Dendritic cell treated with granulocyte-macrophage colony-stimulating factor and Interleukin-4, amounts not matched to agents 40 ng/mL and 50 ng/mL, for 4 days (primary cell): ENCODE measurements at regions of chr1 and their contacts with region 1.

Region 1: DNA sequence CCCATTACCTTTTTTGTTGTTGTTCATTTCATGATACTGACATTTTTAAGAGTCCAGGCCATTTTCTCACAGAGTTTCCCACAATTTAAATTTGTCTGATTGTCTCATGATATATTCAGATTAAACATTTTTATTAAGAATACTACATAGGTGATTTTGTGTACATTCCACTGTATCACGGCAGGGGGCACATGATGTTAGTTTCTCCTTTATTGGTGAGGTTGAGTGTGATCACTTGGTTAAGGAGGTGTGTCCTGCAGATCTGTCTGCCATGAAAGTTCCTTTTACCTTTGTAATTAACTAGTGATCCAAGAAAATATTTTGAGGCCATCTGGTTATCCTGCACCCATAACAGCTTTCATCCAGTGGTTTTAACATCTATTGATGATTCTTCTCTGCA is 11.8 kb downstream of the RTCA start:
- H3K4me3 Mint-ChIP-seq: no peak overlapping the region
- H3K27ac Mint-ChIP-seq: no peak overlapping the region
- H3K4me1 Mint-ChIP-seq: no peaks in the 10 kb centered on the region
- H3K27me3 Mint-ChIP-seq: no peaks in the 10 kb centered on the region

Region 2: DNA sequence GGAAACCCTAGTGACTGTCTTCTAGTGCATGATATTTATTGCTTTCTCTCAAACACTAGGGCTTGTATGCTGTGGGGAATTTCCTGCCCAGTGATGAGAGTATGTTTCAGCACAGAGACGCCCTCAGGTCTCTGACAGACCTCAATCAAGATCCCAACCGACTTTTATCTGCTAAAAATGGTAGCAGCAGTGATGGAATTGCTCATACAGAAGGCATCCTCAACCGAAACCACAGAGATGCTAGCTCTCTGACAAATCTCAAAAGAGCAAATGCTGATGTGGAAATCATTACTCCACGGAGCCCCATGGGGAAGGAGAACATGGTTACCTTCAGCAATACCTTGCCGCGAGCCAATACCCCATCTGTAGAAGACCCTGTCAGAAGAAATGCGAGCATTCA is 972.2 kb before region 1 on chr1:
- intact Hi-C with region 1: no loop called
- H3K4me3 Mint-ChIP-seq: no peak overlapping the region
- H3K27ac Mint-ChIP-seq: no peak overlapping the region
- H3K4me1 Mint-ChIP-seq: no peaks in the 10 kb centered on the region
- H3K27me3 Mint-ChIP-seq: no peaks in the 10 kb centered on the region

Region 3: DNA sequence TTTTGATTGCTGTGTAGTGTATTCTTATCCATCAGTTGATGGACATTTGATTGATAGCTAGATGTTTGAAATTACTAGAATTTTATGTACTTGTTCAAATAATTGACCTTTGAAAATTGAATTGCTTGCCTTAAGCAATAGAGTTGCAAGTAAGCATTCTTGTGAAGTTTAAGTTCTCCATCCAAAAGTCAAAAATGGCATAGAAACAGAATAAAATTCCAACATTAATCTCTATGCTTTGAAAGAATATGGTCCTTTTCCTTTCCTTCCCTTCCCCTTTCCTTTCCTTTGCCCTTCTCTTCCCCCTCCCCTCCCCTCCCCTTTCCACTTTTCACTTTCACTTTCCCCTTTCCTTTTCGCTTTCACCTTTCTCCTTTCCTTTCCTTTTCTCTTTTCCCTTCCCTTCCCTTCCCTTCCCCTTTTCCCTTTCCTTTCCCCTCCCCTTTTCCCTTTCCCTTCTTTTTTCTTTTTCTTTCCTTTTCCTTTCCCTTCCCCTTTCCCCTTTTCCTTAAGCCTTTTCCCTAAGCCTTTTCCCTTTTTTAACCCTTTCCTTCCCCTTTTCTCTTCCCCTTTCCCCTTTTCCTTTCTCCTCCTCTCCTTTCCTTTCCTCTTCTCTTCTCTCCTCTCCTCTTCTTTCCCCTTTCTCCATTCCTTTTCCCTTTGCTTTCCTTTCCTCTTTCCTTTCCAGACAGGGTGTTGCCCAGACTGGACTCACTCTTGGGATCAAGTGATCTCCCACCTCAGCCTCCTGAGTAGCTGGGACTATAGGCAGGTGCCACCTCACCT is 212.5 kb before region 1 on chr1:
- intact Hi-C with region 1: no loop called
- H3K4me3 Mint-ChIP-seq: no peak overlapping the region
- H3K27ac Mint-ChIP-seq: no peak overlapping the region
- H3K4me1 Mint-ChIP-seq: peaks cover 15% of the 10 kb centered on the region
- H3K27me3 Mint-ChIP-seq: no peaks in the 10 kb centered on the region

Region 4: DNA sequence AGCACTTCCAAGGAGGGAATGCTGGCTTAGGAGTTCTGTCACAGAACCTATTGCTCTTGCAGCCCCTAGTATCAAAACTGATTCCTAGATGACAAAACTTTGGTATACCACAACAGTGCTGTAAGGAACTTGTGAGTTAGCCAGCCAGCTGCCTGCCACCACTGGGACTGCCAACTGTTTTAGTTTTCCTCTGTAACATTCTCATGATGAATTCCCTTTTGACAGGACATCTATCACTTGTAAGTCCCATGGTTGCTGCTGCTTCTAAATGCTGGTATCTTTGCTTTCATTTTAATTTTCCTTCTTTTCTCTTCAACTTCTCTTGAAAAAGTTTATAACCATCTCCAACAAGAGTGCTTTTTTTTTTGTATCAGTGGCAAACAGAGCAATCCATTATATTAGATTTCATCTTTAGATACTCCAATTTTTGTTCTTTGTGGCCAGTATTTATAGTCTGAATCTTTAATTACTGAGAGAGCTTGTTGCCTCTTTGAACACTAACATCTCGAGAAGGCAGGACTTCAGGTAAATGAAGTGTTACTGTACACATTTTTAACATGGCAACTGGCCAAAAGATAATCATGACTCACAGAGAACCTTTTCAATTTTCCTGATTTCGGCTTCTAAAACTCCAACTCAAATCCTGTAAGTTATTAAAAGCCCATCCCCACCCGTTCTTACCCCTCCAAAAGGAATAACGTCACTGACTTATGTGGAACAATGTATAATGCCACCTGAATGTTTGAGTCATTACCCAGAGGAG is 48.0 kb before region 1 on chr1:
- intact Hi-C with region 1: loop called (anchors 10 kb)
- H3K4me3 Mint-ChIP-seq: no peak overlapping the region
- H3K27ac Mint-ChIP-seq: no peak overlapping the region
- H3K4me1 Mint-ChIP-seq: peaks cover 10% of the 10 kb centered on the region
- H3K27me3 Mint-ChIP-seq: no peaks in the 10 kb centered on the region